ENCODE measurements at regions of chr10 and their contacts with region 1.

Region 1: DNA sequence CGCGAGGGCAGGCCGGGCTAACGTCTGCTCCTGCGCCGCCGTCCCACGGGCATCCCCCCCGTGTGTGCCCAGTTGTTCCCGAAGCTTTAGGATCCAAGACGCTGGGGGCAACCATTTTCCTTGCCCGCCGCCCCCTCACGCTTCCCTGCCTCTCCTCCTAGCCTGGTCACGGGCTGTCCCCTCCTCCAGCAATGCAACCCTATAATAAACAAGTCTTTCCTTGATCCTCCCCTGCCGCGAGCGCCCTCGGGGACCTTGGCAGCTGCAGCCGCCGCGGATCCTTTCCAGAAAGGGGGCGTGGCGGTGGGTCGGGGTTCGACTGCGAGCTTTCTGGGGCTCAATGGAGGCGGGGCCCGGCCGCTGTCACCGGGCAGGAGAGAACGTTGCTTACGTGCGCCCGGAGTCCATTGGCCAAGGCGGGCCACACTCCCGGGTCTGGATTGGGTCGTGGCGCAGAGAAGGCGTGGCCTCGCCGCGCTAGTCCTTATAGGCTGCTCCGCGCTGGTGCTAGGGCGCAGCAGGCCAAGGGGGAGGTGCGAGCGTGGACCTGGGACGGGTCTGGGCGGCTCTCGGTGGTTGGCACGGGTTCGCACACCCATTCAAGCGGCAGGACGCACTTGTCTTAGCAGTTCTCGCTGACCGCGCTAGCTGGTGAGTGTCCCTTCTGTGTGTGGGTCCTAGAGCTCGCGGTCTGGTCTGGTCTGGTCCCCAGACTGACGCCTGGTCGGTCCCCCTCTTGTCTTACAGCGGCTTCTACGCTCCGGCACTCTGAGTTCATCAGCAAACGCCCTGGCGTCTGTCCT is at the start of gene DDIT4:
- DNase-seq: peak; percentile 100
- H3K4me3 ChIP-seq: peak within 1 kb of the TSS; percentile 81 to 100 (median 98)
- H3K27ac ChIP-seq: peak within 1 kb of the TSS; percentile 93 to 99 (median 97)
- H3K4me1 ChIP-seq: peaks cover 12 to 21% of the 10 kb centered on the region in 2 donors
- H3K27me3 ChIP-seq: no peaks in the 10 kb centered on the region
- CTCF ChIP-seq: peak in 1 of 6 experiments; percentile 16
- POLR2A ChIP-seq: peak; percentile 100
- total RNA-seq, gene DDIT4: 100 to 711 (median 365) TPM

Region 2: DNA sequence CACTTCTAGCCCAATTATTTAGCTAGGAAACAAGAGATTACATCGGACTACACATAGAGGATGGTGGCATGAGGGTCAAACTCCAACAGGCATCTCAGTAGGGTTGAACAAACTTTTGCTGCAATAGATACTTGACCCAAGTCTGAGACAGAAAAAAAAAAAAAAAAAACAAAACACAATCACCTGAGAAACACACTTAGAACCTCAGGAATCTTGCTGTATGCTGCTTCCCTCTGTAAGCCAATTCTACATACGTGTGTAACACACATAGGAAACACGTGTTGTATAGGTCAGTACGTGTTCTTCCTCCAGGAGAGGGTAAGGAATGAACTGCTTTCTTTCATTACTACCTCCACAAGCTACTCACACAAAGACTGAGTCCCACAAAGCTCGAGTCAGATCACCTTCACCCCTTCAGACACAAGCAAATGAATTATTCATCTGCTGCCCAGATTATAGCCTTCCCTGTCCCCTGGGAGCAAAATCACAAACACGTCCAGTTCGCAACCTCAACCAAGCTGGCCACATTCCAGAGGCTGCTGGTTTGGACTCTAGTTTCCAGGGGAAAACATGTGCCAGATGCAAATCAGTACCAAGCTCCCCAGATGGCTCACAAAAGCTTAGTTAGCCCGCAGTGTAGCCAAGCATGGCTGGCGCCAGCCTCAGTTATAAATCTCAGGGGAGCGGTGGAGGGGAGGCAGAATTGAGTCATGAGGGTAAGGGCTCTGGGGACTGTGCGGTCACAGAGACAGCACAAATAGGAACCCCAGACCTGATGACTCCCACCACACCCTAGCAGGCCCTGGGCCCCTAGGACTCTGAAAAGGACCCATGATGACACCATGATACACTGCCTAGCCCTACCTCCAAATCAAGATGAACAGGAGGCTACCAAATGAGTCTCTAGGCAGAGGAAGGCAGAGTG is 437.7 kb before region 1 on chr10:
- intact Hi-C with region 1: no loop called
- DNase-seq: peak; percentile 74 to 97 (median 92)
- H3K4me3 ChIP-seq: peak overlapping the region in 1 of 4 donors; percentile 3
- H3K27ac ChIP-seq: peak overlapping the region in 4 of 5 donors; percentile 51 to 89 (median 76)
- H3K4me1 ChIP-seq: peaks cover 57 to 85% of the 10 kb centered on the region in 2 donors
- H3K27me3 ChIP-seq: no peaks in the 10 kb centered on the region
- CTCF ChIP-seq: no peak
- POLR2A ChIP-seq: peak in 1 of 2 donors; percentile 48

Region 3: GRCh38 chr10:72297968-72298773 is 24.6 kb after region 1 on chr10:
- intact Hi-C with region 1: loop called in 1 of 2 experiments (anchors 2 kb)
- DNase-seq: peak; percentile 99 to 100 (median 100)
- H3K4me3 ChIP-seq: peak overlapping the region in 2 of 4 donors; percentile 42 to 63
- H3K27ac ChIP-seq: peak overlapping the region; percentile 51 to 97 (median 85)
- H3K4me1 ChIP-seq: peaks cover 15 to 24% of the 10 kb centered on the region in 2 donors
- H3K27me3 ChIP-seq: no peaks in the 10 kb centered on the region
- CTCF ChIP-seq: no peak
- POLR2A ChIP-seq: peak; percentile 79 to 89

Region 4: GRCh38 chr10:72308320-72308987 is 34.8 kb after region 1 on chr10:
- intact Hi-C with region 1: no loop called
- DNase-seq: peak; percentile 71 to 92 (median 86)
- H3K4me3 ChIP-seq: no peak overlapping the region
- H3K27ac ChIP-seq: peak overlapping the region; percentile 60 to 86 (median 84)
- H3K4me1 ChIP-seq: peaks cover 24 to 44% of the 10 kb centered on the region in 2 donors
- H3K27me3 ChIP-seq: no peaks in the 10 kb centered on the region
- CTCF ChIP-seq: peak in 4 of 6 experiments; percentile 25 to 43 (median 34)
- POLR2A ChIP-seq: peak in 1 of 2 donors; percentile 57

Region 5: DNA sequence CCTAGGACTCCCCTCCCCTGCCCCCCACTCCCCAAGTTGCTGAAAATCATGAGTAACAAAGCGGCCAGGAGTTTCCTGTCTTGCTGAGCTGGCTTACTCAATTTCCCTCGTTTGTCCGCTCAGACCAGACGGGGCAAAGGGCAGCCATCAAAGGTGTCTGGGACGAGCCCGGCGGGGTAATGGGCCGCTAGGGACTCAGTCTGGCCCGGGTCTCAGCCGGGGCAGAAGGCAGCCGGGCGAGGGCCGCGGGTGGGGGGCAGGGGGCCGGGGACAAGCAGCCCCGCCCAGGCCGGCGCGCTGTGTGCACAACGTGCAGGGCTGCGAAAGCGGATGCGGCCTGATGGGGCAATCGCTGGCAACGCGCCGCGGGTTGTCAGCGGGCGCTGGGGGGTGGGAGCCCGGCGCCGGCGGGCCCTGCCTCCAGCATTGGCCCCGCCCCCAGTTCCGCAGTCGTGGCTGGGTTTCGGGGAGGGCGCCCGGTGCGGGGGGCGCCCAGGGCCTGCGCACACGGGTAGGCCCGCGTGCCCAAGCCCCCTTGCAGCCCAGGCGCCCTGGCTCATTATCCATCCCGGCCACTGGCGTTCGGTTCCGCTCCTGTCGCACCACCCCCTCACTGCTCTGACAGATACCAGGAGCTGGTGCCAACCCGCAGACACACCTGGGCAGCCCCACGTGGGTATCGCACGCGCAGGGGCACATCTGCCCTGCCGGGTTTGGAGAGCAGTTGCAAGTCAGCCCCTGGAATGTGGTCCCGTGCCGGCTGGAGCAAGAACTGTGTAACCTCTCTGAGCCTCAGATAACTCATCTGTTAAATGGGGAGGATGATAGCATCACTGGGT is 46.0 kb after region 1 on chr10:
- intact Hi-C with region 1: loop called in 1 of 2 experiments (anchors 10 kb)
- DNase-seq: peak; percentile 92 to 97 (median 95)
- H3K4me3 ChIP-seq: peak overlapping the region in 2 of 4 donors; percentile 8 to 35
- H3K27ac ChIP-seq: peak overlapping the region; percentile 92 to 98 (median 96)
- H3K4me1 ChIP-seq: peaks cover 61 to 77% of the 10 kb centered on the region in 2 donors
- H3K27me3 ChIP-seq: no peaks in the 10 kb centered on the region
- CTCF ChIP-seq: no peak
- POLR2A ChIP-seq: peak; percentile 14 to 59

Measured in adrenal gland (tissue), 19 donors.